AG04449 (cell line): ENCODE measurements at regions of chr20 and their contacts with region 1.

Region 1: GRCh38 chr20:54051068-54051467 is 19.3 kb downstream of the BCAS1 start:
- DNase-seq: no peak
- H3K4me3 ChIP-seq: no peak overlapping the region
- CTCF ChIP-seq: no peak

Region 2: GRCh38 chr20:54062812-54063280 is 11.8 kb after region 1 on chr20:
- CTCF ChIA-PET with region 1: interaction called, 20 read pairs
- POLR2A ChIA-PET with region 1: no interaction called
- DNase-seq: no peak
- H3K4me3 ChIP-seq: no peak overlapping the region
- CTCF ChIP-seq: peak; percentile 38